Left colon (tissue), 2 donors: ENCODE measurements at regions of chr9 and their contacts with region 1.

Region 1: DNA sequence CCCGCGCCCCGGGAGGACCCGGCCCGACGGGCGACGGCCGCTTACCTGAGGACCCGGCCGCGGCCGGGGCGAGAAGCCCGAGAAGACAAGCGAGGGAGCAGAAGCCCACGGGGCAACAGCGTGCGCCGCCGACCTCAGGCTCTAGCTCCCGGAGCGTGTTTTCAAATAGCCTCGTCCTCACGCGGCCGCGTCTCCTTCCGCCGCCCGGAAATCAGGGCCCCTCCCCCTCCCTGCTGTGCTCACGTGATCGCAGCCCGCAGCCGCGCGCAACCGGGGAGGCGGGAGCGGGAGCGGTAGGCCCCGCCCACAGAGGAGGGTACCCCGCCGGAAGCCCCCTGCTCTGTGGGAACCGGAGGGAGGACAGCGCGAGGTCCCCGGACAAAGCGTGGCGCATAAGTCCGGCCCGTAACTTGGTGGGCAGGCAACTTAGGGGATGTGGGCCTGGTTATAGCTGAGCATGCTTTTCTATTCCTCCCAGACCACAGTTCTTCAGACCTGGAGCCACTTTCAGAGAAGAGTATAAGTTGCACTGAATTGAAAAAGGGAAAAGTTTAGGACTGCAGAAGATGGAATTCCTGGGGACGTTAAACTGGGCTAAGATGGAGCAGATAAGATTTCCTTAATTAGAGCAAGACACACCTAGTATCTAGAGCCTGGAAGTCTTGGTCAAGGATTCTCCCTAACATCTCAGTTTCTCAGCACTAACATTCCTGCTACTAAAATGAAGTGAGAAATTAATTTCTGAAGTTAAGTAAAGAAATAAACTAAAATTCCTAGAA is at the start of gene TEX10:
- DNase-seq: peak; percentile 86 to 94
- ATAC-seq: peak; percentile 98
- total RNA-seq, gene TEX10: 9.4 TPM

Region 2: GRCh38 chr9:100437860-100438805 is 85.2 kb after region 1 on chr9:
- intact Hi-C with region 1: loop called in 1 of 2 experiments (anchors 10 kb)
- DNase-seq: peak; percentile 52 to 79
- ATAC-seq: peak; percentile 52